Activated CD8-positive, alpha-beta T cell treated with anti-CD3 and anti-CD28 coated beads for 36 hours (primary cell): ENCODE measurements at regions of chr7 and their contacts with region 1.

Region 1: DNA sequence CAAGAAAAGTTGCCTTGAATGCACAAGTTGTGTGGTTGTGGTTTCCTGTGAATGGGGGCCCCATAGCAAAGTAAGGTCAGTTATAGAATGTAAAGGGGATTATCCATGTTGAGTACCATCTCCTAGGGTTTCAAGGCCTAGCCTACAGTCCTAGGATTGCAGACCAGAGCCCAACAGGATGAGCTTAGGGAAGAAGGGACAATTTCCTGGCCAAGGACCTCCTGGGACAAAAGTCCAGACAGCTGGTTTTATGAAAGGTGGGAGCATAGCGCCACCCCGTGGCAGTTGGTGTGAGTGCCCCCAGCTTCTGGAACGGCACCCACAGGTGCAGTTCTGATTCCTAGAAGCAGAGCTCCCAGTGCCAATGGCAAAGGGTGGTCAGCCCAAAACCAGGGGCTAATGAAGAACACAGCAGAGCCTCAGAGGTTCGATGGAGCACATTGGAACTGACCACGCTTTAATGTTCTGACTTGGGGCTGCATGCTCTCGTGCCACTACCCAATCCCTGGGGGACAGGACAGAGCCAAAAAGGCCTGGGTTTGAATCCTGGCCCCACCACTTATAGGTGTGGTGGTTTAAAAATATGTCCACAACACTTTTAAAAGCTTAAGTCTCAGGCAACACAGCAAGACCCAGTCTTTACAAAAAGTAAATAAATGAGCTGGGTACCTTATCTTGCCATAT is 25.8 kb upstream of the TMEM120A start:
- DNase-seq: peak; percentile 80
- ATAC-seq: peak; percentile 86
- H3K4me3 Mint-ChIP-seq: no peak overlapping the region
- H3K27ac Mint-ChIP-seq: no peak overlapping the region
- H3K4me1 Mint-ChIP-seq: peaks cover 8% of the 10 kb centered on the region
- H3K27me3 Mint-ChIP-seq: no peaks in the 10 kb centered on the region
- CTCF ChIP-seq: peak; percentile 98

Region 2: GRCh38 chr7:75866489-75867389 is 153.4 kb before region 1 on chr7:
- CTCF ChIA-PET with region 1: interaction called, 80 read pairs
- POLR2A ChIA-PET with region 1: interaction called, 4 read pairs
- intact Hi-C with region 1: loop called (anchors 2 kb)
- DNase-seq: peak; percentile 70
- ATAC-seq: peak; percentile 69
- H3K4me3 Mint-ChIP-seq: no peak overlapping the region
- H3K27ac Mint-ChIP-seq: no peak overlapping the region
- H3K4me1 Mint-ChIP-seq: peaks cover 22% of the 10 kb centered on the region
- H3K27me3 Mint-ChIP-seq: peaks cover 8% of the 10 kb centered on the region
- CTCF ChIP-seq: peak; percentile 93

Region 3: DNA sequence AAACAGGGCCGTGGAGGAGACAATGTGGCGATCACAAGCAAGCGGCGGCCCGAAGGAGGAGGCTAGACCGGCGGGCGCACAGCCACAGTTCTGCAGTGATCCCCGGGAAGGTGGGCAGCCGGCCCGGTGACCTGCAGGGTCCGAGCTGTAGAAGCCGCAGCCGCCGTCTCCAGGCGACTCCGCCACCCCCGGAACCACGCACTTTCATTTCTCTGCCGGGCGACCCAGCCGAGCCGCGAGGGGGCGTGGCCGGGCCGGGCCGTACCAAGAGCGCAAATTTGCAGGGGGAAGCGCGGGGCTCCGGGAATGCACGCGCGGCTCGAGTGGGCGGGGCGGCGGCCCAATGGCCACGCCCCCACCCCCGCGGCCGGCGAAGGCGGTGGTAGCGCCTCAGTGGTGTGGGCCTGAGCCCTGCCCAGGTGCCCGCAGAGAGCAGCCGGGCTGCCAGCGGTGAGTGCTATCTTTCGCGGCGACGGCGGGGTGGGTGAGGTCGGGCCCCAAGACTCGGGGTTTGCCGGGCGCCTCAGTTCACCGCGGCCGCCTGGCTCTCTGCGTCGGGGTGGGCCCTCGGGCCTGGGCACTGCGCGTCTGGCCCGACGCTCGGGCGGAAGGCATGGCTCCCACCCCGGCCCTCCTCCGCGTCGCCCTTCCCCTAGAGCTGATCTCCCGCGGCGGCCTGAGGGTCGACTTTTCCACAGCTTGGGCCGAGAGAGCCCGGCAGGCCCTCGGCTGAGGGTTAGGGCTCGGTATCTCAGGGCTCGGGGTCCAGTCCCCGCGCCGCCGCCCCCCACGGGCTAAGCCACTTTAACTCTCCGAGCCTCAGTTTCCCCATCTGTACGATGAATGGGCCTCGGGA is 105.2 kb before region 1 on chr7 and contains the start of gene POR:
- CTCF ChIA-PET with region 1: interaction called, 23 read pairs
- POLR2A ChIA-PET with region 1: no interaction called
- intact Hi-C with region 1: no loop called
- DNase-seq: peak; percentile 94
- ATAC-seq: peak; percentile 94
- H3K4me3 Mint-ChIP-seq: peak within 1 kb of the TSS; percentile 79
- H3K27ac Mint-ChIP-seq: peak within 1 kb of the TSS; percentile 78
- H3K4me1 Mint-ChIP-seq: peaks cover 28% of the 10 kb centered on the region
- H3K27me3 Mint-ChIP-seq: no peaks in the 10 kb centered on the region
- CTCF ChIP-seq: no peak
- total RNA-seq, gene POR: 22.8 to 25.2 TPM

Region 4: GRCh38 chr7:76000367-76000965 is 19.7 kb before region 1 on chr7:
- CTCF ChIA-PET with region 1: interaction called, 10 read pairs
- POLR2A ChIA-PET with region 1: interaction called, 3 read pairs
- intact Hi-C with region 1: no loop called
- DNase-seq: no peak
- ATAC-seq: no peak
- H3K4me3 Mint-ChIP-seq: no peak overlapping the region
- H3K27ac Mint-ChIP-seq: no peak overlapping the region
- H3K4me1 Mint-ChIP-seq: peaks cover 10% of the 10 kb centered on the region
- H3K27me3 Mint-ChIP-seq: no peaks in the 10 kb centered on the region
- CTCF ChIP-seq: no peak

Region 5: GRCh38 chr7:76040126-76040525 is 20.0 kb after region 1 on chr7:
- CTCF ChIA-PET with region 1: interaction called, 19 read pairs
- POLR2A ChIA-PET with region 1: no interaction called
- intact Hi-C with region 1: no loop called
- DNase-seq: no peak
- ATAC-seq: no peak
- H3K4me3 Mint-ChIP-seq: no peak overlapping the region
- H3K27ac Mint-ChIP-seq: no peak overlapping the region
- H3K4me1 Mint-ChIP-seq: peaks cover 18% of the 10 kb centered on the region
- H3K27me3 Mint-ChIP-seq: no peaks in the 10 kb centered on the region
- CTCF ChIP-seq: no peak

Region 6: GRCh38 chr7:76074954-76075335 is 54.8 kb after region 1 on chr7:
- CTCF ChIA-PET with region 1: no interaction called
- POLR2A ChIA-PET with region 1: no interaction called
- intact Hi-C with region 1: no loop called
- DNase-seq: no peak
- ATAC-seq: no peak
- H3K4me3 Mint-ChIP-seq: no peak overlapping the region
- H3K27ac Mint-ChIP-seq: no peak overlapping the region
- H3K4me1 Mint-ChIP-seq: peaks cover 11% of the 10 kb centered on the region
- H3K27me3 Mint-ChIP-seq: no peaks in the 10 kb centered on the region
- CTCF ChIP-seq: no peak